ENCODE measurements at regions of chr12 and their contacts with region 1.

Region 1: GRCh38 chr12:105107494-105108371 is at the start of gene WASHC4:
- DNase-seq: peak; percentile 99
- H3K4me3 Mint-ChIP-seq: peak within 1 kb of the TSS; percentile 96
- H3K27ac Mint-ChIP-seq: peak within 1 kb of the TSS; percentile 96
- H3K4me1 Mint-ChIP-seq: peaks cover 33% of the 10 kb centered on the region
- H3K27me3 Mint-ChIP-seq: peaks cover 25% of the 10 kb centered on the region
- total RNA-seq, gene WASHC4: 31.5 and 36.5 TPM in 2 replicates

Region 2: DNA sequence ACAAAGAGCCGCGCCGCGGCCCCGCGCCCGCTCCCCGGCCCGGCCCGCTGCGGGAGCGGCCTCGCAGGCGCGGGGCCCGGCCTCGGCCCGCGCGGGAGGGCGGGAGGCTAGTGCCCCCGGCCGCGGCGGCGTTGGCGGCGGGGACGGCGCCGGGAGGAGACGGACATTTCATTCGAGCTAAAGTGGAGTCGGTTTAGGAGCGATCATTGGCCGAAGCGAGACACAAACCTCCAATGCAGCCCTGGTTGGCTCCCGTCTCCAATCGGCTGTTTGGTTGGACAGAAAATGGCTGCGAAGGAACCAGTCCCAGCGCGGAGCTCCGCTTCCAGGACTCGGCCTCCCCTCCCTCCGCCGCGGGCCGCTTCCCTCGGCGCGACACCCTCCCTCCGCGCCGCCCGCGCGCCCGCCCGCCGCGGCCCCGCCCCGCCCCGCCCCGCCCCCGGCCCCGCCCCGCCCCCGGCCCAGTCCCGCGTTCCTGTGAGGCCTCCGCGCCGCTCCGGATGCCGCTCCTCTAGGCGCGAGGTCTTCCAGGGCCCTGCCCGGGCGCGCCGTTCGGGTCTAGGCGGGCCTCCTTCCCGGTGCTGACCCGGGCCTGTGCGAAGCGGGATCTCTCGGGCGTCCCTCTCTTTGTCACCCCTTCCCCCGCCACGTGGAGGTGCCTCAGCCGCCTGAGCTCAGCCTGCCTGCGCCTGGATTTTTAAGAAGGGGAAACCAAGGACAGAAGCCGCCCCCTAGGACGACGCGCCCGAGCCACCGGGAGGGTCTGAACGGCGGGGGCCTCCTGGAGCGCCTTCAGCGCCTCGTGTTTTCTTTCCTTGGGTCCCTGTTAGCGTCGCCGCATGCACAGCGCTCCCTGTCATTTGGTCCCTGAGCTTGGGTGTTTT is 969.6 kb before region 1 on chr12 and contains the start of gene NFYB:
- intact Hi-C with region 1: loop called (anchors 5 kb)
- DNase-seq: peak; percentile 98
- H3K4me3 Mint-ChIP-seq: peak within 1 kb of the TSS; percentile 87
- H3K27ac Mint-ChIP-seq: peak within 1 kb of the TSS; percentile 91
- H3K4me1 Mint-ChIP-seq: peaks cover 16% of the 10 kb centered on the region
- H3K27me3 Mint-ChIP-seq: peaks cover 17% of the 10 kb centered on the region
- total RNA-seq, gene NFYB: 25.4 and 28.6 TPM in 2 replicates

Region 3: GRCh38 chr12:104201238-104202001 is 906.3 kb before region 1 on chr12:
- intact Hi-C with region 1: loop called (anchors 10 kb)
- DNase-seq: peak; percentile 85
- H3K4me3 Mint-ChIP-seq: no peak overlapping the region
- H3K27ac Mint-ChIP-seq: no peak overlapping the region
- H3K4me1 Mint-ChIP-seq: peaks cover 2% of the 10 kb centered on the region
- H3K27me3 Mint-ChIP-seq: peaks cover 18% of the 10 kb centered on the region

Region 4: GRCh38 chr12:104686196-104686595 is 421.5 kb before region 1 on chr12:
- intact Hi-C with region 1: loop called (anchors 5 kb)
- DNase-seq: no peak
- H3K4me3 Mint-ChIP-seq: peak overlapping the region; percentile 42
- H3K27ac Mint-ChIP-seq: peak overlapping the region; percentile 96
- H3K4me1 Mint-ChIP-seq: peaks cover 81% of the 10 kb centered on the region
- H3K27me3 Mint-ChIP-seq: no peaks in the 10 kb centered on the region

Region 5: GRCh38 chr12:105084251-105085250 is 23.2 kb before region 1 on chr12 and contains the start of gene ALDH1L2:
- intact Hi-C with region 1: loop called (anchors 1 kb)
- DNase-seq: peak; percentile 89
- H3K4me3 Mint-ChIP-seq: peak within 1 kb of the TSS; percentile 87
- H3K27ac Mint-ChIP-seq: peak within 1 kb of the TSS; percentile 65
- H3K4me1 Mint-ChIP-seq: peaks cover 9% of the 10 kb centered on the region
- H3K27me3 Mint-ChIP-seq: peaks cover 33% of the 10 kb centered on the region
- total RNA-seq, gene ALDH1L2: 1.3 and 1.5 TPM in 2 replicates

Region 6: GRCh38 chr12:105235732-105236476 is 128.2 kb after region 1 on chr12 and contains the start of gene APPL2:
- intact Hi-C with region 1: loop called (anchors 5 kb)
- DNase-seq: peak; percentile 94
- H3K4me3 Mint-ChIP-seq: peak within 1 kb of the TSS; percentile 87
- H3K27ac Mint-ChIP-seq: peak within 1 kb of the TSS; percentile 85
- H3K4me1 Mint-ChIP-seq: peaks cover 32% of the 10 kb centered on the region
- H3K27me3 Mint-ChIP-seq: peaks cover 2% of the 10 kb centered on the region
- total RNA-seq, gene APPL2: 18.2 and 20.5 TPM in 2 replicates

Region 7: GRCh38 chr12:105330283-105330930 is 222.7 kb after region 1 on chr12 and contains the start of gene C12orf75:
- intact Hi-C with region 1: loop called (anchors 2 kb)
- DNase-seq: peak; percentile 98
- H3K4me3 Mint-ChIP-seq: peak within 1 kb of the TSS; percentile 82
- H3K27ac Mint-ChIP-seq: peak within 1 kb of the TSS; percentile 91
- H3K4me1 Mint-ChIP-seq: peaks cover 72% of the 10 kb centered on the region
- H3K27me3 Mint-ChIP-seq: no peaks in the 10 kb centered on the region
- total RNA-seq, gene C12orf75: 91.4 and 96.1 TPM in 2 replicates